ENCODE measurements at regions of chr10 and their contacts with region 1.

Region 1: GRCh38 chr10:22340362-22341189 is 4.7 kb upstream of the SPAG6 start:
- DNase-seq: peak in 6 of 9 experiments; percentile 50 to 75 (median 64)
- ATAC-seq: peak; percentile 39
- H3K4me3 ChIP-seq: peak overlapping the region; percentile 50 to 70
- H3K4me3 Mint-ChIP-seq: peak overlapping the region; percentile 87
- H3K27ac ChIP-seq: peak overlapping the region; percentile 25 to 40
- H3K27ac Mint-ChIP-seq: peak overlapping the region; percentile 84
- H3K4me1 ChIP-seq: peaks cover 18% of the 10 kb centered on the region
- H3K4me1 Mint-ChIP-seq: peaks cover 14% of the 10 kb centered on the region
- H3K27me3 ChIP-seq: peaks cover 74 to 87% of the 10 kb centered on the region in 2 experiments
- H3K27me3 Mint-ChIP-seq: peaks cover 67% of the 10 kb centered on the region
- CTCF ChIP-seq: no peak

Region 2: DNA sequence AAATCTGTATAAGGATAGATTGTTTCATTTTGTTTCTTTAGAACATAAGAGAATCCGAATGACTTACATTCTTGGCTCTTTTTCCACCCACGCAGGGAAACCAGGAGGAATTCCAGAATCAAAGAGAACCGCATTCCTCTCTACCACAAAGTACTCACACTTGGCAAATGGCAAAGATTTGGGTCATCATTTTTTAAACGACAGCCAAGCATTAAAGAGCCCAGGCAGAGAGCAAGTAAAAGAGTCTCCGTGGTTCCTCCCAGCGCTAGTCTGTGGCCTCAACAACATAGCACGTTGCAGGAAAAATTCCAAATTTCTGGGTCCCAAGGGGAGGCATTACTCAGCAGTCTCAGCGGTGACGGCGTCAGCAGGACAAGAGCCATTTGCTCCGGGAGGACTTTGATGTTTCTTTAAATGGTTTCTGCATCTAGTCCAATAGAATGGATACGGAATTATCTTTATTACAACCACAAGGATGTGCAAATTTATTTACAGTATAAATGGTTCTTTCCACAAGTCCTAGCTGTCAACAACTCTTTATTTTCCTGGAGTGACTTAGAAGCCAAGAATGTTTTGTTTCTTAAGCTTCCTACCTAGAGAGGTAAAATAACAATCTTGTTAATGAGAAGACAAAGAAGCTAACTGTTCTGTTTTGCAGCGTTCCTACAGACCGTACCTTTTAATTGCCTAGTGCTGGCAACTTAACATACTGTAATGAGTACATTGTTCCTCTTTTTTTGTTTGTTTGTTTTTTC is 1047.6 kb before region 1 on chr10:
- CTCF ChIA-PET with region 1: no interaction called
- POLR2A ChIA-PET with region 1: no interaction called
- intact Hi-C with region 1: no loop called
- DNase-seq: no peak
- ATAC-seq: no peak
- H3K4me3 ChIP-seq: no peak overlapping the region
- H3K4me3 Mint-ChIP-seq: peak overlapping the region; percentile 13
- H3K27ac ChIP-seq: no peak overlapping the region
- H3K27ac Mint-ChIP-seq: no peak overlapping the region
- H3K4me1 ChIP-seq: no peaks in the 10 kb centered on the region
- H3K4me1 Mint-ChIP-seq: peaks cover 6% of the 10 kb centered on the region
- H3K27me3 ChIP-seq: no peaks in the 10 kb centered on the region
- H3K27me3 Mint-ChIP-seq: peaks cover 16% of the 10 kb centered on the region
- CTCF ChIP-seq: no peak

Region 3: DNA sequence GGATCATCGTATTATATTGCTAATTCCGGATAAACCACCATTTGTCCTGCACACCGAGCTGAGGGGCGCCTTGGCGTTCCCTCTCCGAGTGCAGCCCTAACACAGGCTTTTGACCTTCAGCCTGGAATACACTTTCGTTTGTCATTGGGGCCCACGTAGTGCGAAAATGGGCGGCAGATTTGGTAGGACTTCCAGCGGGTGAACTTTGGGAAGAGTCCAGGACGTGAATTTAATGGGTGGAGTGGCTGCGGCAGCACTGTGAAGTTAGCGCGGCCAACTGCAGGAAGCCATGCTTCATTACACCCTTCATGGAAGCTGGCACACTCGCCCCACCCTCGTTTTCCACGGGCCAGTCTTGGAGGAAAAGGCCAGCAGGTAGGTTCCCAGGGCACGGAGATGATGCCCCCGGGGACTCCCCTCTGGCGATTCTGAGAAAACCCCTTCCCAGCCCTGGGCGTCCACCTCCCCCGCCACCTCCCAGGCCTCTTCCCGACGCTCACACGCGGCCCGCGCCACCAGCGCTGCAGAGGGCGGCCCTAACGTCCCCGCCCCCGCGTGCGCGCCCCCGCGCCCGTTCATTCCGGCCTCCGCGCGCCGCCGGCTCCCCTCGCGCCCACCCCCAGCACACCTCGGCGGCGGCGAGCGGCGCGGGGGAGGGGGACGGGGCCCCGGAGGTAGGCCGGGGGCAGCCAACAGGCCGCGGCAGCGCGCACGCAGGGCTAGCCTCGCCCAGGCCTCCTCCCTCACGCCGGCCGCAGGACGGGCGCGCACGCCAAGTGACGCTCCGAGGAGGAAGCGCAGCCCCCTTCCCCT is 806.9 kb before region 1 on chr10 and contains the start of gene MLLT10:
- CTCF ChIA-PET with region 1: no interaction called
- POLR2A ChIA-PET with region 1: no interaction called
- intact Hi-C with region 1: no loop called
- DNase-seq: peak; percentile 83 to 98 (median 92)
- ATAC-seq: peak; percentile 84
- H3K4me3 ChIP-seq: peak within 1 kb of the TSS; percentile 69 to 81
- H3K4me3 Mint-ChIP-seq: peak within 1 kb of the TSS; percentile 96
- H3K27ac ChIP-seq: peak within 1 kb of the TSS; percentile 64 to 75
- H3K27ac Mint-ChIP-seq: peak within 1 kb of the TSS; percentile 94
- H3K4me1 ChIP-seq: peaks cover 16% of the 10 kb centered on the region
- H3K4me1 Mint-ChIP-seq: peaks cover 29% of the 10 kb centered on the region
- H3K27me3 ChIP-seq: no peaks in the 10 kb centered on the region
- H3K27me3 Mint-ChIP-seq: no peaks in the 10 kb centered on the region
- CTCF ChIP-seq: peak; percentile 22
- total RNA-seq, gene MLLT10: 36.7 to 41.0 TPM

Region 4: DNA sequence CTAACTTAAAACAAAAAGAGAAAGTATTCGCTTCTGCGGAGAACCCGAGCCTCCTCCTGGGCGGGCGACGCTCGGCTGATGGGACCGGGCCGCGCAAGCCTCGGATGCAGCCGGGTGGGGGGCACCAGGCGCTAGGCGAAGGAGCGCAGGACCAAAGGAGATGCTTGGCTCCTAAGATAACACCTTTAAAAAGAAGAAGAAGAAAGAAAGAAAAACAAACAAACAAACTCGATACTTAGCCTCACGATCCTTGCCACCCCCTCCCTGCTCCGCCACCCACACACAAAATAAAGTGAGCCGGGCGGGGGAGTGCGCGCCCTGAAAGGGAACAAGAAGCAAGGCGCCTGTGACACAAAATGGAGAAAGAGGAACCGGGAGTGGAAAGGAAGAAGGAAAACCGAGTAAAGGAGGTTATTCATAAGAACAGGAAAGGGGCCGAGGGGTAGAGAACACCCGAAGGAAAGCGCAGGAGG is 88.8 kb before region 1 on chr10:
- CTCF ChIA-PET with region 1: no interaction called
- POLR2A ChIA-PET with region 1: interaction called, 6 read pairs
- intact Hi-C with region 1: loop called in 1 of 2 experiments (anchors 5 kb)
- DNase-seq: peak; percentile 25 to 82 (median 63)
- ATAC-seq: peak; percentile 59
- H3K4me3 ChIP-seq: peak overlapping the region; percentile 59 to 67
- H3K4me3 Mint-ChIP-seq: peak overlapping the region; percentile 94
- H3K27ac ChIP-seq: peak overlapping the region; percentile 77 to 85
- H3K27ac Mint-ChIP-seq: peak overlapping the region; percentile 98
- H3K4me1 ChIP-seq: peaks cover 6% of the 10 kb centered on the region
- H3K4me1 Mint-ChIP-seq: peaks cover 24% of the 10 kb centered on the region
- H3K27me3 ChIP-seq: peaks cover 9 to 10% of the 10 kb centered on the region in 2 experiments
- H3K27me3 Mint-ChIP-seq: peaks cover 30% of the 10 kb centered on the region
- CTCF ChIP-seq: no peak

Region 5: DNA sequence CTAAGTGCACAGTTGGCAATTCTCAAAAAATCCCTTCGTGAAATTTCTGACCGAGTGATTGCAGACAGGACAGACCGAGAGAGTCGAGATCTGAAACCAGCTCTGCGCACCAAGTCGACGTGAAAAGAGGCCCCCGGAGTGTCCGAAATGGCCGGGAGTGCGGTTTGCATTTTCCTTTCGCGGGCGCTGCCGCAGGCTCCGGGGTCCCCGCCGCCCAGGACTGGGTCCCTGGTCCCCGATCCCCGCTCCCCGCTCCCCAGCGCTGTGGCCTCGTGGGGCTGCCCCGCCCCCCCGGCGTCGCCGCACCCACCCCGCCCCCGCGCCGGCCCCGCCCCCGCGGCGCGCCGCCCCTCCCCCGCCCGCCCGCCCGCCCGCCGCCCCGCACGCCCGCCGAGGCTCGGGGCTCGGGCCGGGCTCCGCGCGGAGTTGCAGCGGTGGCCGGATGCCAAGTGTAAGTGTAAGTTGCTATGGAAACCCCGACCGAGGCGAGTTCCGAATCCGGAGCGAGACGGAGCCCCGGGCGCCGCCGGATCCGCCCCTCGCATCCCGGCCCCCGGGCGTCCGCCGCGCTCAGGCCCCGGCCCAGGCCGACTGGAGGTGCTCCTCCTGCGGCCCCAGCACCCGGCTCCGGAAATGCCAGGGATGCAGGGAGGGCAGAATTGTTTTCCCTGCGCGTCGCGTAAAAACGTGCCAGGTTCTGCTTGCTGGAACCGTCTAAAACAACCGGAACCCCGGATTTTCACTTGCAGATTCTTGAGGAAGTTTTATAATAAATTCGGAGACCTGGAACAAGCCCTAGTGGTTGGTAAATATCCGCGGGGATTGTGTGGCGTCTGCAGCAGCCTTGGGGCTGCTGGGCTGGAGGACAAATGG is 15.1 kb before region 1 on chr10:
- CTCF ChIA-PET with region 1: interaction called, 3 read pairs
- POLR2A ChIA-PET with region 1: interaction called, 3 read pairs
- intact Hi-C with region 1: loop called in 1 of 2 experiments (anchors 2 kb)
- DNase-seq: peak in 8 of 9 experiments; percentile 62 to 92 (median 78)
- ATAC-seq: peak; percentile 26
- H3K4me3 ChIP-seq: peak overlapping the region; percentile 43 to 57
- H3K4me3 Mint-ChIP-seq: peak overlapping the region; percentile 80
- H3K27ac ChIP-seq: peak overlapping the region; percentile 46 to 51
- H3K27ac Mint-ChIP-seq: peak overlapping the region; percentile 88
- H3K4me1 ChIP-seq: peaks cover 33% of the 10 kb centered on the region
- H3K4me1 Mint-ChIP-seq: peaks cover 40% of the 10 kb centered on the region
- H3K27me3 ChIP-seq: peaks cover 20 to 21% of the 10 kb centered on the region in 2 experiments
- H3K27me3 Mint-ChIP-seq: peaks cover 38% of the 10 kb centered on the region
- CTCF ChIP-seq: no peak